Heart right ventricle (tissue), 16 donors: ENCODE measurements at regions of chr13 and their contacts with region 1.

Region 1: GRCh38 chr13:106690779-106691178 is 122.8 kb upstream of the ARGLU1 start:
- DNase-seq: peak in 1 of 2 donors; percentile 14
- ATAC-seq: peak; percentile 34 to 84 (median 73)
- H3K4me3 ChIP-seq: no peak overlapping the region
- H3K27ac ChIP-seq: peak overlapping the region in 9 of 10 donors; percentile 8 to 74 (median 42)
- H3K4me1 ChIP-seq: peaks cover 0 to 24% (median 1%) of the 10 kb centered on the region in 9 donors
- H3K27me3 ChIP-seq: no peaks in the 10 kb centered on the region
- CTCF ChIP-seq: no peak

Region 2: GRCh38 chr13:106520205-106521054 is 170.3 kb before region 1 on chr13:
- intact Hi-C with region 1: no loop called
- DNase-seq: no peak
- ATAC-seq: no peak
- H3K4me3 ChIP-seq: no peak overlapping the region
- H3K27ac ChIP-seq: no peak overlapping the region
- H3K4me1 ChIP-seq: peaks cover 0 to 92% (median 33%) of the 10 kb centered on the region in 9 donors
- H3K27me3 ChIP-seq: peaks cover 0 to 3% (median 0%) of the 10 kb centered on the region in 7 donors
- CTCF ChIP-seq: peak; percentile 16 to 68 (median 44)

Region 3: DNA sequence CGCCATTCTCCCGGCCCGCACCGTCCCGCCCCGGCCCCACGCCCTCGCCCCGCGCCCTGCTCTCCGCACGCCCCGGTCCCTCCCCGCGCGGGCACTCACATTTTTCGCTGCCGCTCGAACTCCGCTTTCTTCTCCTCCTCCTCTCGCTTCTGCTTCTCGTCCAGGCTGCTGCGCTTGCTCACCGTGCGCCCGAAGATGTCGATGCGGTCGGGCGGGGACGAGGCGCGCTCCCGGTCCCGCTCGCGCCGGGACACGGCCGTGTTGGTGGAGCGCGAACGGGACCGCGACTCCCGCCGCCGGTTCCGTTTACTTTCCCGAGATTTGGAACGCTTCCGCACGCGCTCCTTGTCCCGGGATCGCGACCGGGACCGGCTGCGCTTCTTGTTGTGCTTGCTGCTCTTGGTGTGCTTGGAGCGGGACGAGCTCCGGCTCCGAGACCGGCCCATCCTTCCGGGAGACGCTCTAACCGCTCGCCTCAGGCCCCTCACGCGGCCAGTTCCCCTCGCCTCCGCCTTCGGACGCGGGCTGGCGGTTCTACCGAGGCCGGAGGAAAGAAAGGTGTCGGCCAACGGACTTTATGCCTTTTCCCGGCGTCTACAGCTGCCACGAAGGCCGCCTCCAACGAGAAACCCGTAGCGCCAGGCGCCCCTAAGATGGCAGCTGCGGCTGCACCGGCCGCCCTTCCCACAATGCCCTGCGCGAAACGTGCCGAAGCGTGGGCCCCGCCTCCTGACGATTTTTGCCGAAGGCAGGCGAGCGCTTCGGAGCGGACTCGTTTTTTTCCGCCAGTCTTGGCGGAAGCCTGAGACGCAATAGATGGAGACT is 123.1 kb before region 1 on chr13 and contains the start of gene ARGLU1:
- intact Hi-C with region 1: loop called in 2 of 10 experiments (anchors 10 kb)
- DNase-seq: peak; percentile 94 to 96
- ATAC-seq: peak; percentile 90 to 98 (median 96)
- H3K4me3 ChIP-seq: peak within 1 kb of the TSS; percentile 66 to 96 (median 87)
- H3K27ac ChIP-seq: peak within 1 kb of the TSS; percentile 92 to 99 (median 97)
- H3K4me1 ChIP-seq: peaks cover 15 to 54% (median 44%) of the 10 kb centered on the region in 9 donors
- H3K27me3 ChIP-seq: no peaks in the 10 kb centered on the region
- CTCF ChIP-seq: no peak
- total RNA-seq, gene ARGLU1: 19.1 to 42.2 (median 29.6) TPM

Region 4: DNA sequence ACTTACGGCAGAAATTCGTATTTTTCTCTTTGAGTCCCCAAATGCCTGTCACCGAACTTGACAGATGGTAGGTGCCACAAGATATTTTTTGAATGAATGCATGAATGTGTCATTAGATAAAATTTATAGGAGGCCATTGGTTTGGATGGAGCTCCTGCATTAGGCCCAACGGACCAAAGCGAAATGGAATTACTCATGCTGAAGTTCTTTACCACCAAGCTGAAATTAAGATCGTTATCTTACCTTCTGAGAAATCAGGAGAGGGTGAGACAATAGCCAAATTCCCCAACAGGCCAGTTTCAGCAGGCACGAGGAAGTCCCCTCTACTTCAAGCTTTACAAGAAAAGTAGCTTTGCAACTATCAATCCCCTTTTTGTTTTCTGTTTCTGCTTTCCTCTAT is 329.6 kb after region 1 on chr13:
- intact Hi-C with region 1: no loop called
- DNase-seq: no peak
- ATAC-seq: no peak
- H3K4me3 ChIP-seq: no peak overlapping the region
- H3K27ac ChIP-seq: no peak overlapping the region
- H3K4me1 ChIP-seq: no peaks in the 10 kb centered on the region
- H3K27me3 ChIP-seq: no peaks in the 10 kb centered on the region
- CTCF ChIP-seq: no peak

Region 5: GRCh38 chr13:107138486-107138885 is 447.7 kb after region 1 on chr13:
- intact Hi-C with region 1: loop called in 1 of 10 experiments (anchors 10 kb)
- DNase-seq: no peak
- ATAC-seq: peak in 2 of 8 donors; percentile 25 to 34
- H3K4me3 ChIP-seq: no peak overlapping the region
- H3K27ac ChIP-seq: peak overlapping the region in 3 of 10 donors; percentile 7 to 56 (median 46)
- H3K4me1 ChIP-seq: peaks cover 0 to 35% (median 18%) of the 10 kb centered on the region in 9 donors
- H3K27me3 ChIP-seq: no peaks in the 10 kb centered on the region
- CTCF ChIP-seq: no peak